Activated naive CD8-positive, alpha-beta T cell treated with anti-CD3 and anti-CD28 coated beads, Interleukin-2, amount 10 ng/mL, durations not matched to agents 7 days and 5 days (primary cell): ENCODE measurements at regions of chr4 and their contacts with region 1.

Region 1: DNA sequence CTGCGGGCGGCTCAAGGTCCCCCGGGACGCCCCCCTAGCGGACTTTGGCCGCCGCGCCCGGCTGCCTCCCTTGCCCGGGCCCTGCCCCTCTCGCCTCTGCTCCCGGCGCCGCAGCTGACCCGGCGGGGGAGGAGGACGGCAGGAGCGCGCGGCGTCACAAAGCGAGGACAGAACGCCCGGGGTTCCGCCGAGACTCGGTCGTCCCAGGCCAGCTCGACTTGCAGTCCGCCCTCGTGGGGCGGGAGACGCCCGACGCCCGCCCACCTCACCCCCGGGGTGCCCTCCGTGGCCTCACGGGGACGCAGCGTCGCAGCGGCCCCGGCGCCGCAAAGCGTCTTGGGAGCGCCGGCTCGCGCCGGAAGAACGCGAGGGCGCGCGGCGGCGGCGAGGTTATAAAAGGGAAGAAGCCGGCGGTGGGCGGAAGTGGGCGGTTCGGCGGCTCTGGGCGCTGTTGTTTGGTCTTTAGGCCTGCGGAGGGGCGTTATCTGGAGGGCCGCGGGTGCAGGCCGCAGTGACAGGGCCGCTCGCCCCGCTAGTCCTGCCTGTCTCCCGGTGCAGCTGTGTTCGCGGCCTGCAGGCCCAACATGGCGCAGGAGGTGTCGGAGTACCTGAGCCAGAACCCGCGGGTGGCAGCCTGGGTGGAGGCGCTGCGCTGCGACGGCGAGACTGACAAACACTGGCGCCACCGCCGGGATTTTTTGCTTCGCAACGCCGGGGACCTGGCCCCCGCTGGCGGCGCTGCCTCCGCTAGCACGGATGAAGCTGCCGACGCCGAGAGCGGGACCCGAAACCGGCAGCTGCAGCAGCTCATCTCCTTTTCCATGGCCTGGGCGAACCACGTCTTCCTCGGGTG is at the start of gene CDKN2AIP:
- DNase-seq: peak; percentile 95
- ATAC-seq: peak; percentile 86
- H3K4me3 Mint-ChIP-seq: peak within 1 kb of the TSS; percentile 99
- H3K27ac Mint-ChIP-seq: peak within 1 kb of the TSS; percentile 99
- H3K4me1 Mint-ChIP-seq: peaks cover 41% of the 10 kb centered on the region
- H3K27me3 Mint-ChIP-seq: no peaks in the 10 kb centered on the region
- total RNA-seq, gene CDKN2AIP: 38.8 to 39.8 TPM

Region 2: GRCh38 chr4:183407128-183407585 is 37.3 kb before region 1 on chr4:
- POLR2A ChIA-PET with region 1: interaction called, 17 read pairs
- DNase-seq: peak; percentile 96
- ATAC-seq: peak; percentile 97
- H3K4me3 Mint-ChIP-seq: peak overlapping the region; percentile 71
- H3K27ac Mint-ChIP-seq: peak overlapping the region; percentile 60
- H3K4me1 Mint-ChIP-seq: peaks cover 8% of the 10 kb centered on the region
- H3K27me3 Mint-ChIP-seq: peaks cover 6% of the 10 kb centered on the region

Region 3: DNA sequence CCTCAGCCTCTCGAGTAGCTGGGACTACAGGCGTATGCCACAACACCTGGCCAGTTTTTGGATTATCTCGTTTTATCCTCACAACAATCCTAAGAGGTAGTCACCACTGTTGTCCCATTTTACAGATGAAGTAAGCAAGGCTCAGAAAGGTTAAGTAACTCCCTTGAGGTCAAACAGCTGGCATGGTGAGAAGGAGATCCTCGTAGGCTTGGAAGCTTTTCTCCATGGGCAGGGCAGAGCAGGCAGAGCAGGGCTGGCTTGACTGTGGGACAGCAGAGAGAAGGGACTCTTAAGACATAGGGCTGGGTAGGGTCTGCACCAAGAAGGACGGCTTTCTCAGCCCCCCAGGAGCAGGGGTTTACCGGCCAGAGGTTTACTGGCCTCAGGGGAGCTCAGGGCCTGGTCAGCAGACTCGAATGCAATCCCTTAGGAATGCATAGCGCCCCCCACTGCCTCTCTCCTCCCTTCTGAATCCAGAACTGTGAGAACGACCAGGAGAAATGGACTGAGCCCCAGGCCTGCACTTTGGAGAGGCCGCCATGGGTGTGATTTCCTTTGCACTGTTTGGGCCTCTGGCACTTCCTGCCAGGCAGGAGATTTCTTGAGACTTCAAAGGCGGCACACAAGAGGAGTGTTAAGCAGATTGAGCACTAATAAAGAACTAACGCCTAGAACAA is 14.0 kb before region 1 on chr4:
- POLR2A ChIA-PET with region 1: interaction called, 47 read pairs
- DNase-seq: peak; percentile 39
- ATAC-seq: peak; percentile 96
- H3K4me3 Mint-ChIP-seq: peak overlapping the region; percentile 48
- H3K27ac Mint-ChIP-seq: peak overlapping the region; percentile 78
- H3K4me1 Mint-ChIP-seq: peaks cover 24% of the 10 kb centered on the region
- H3K27me3 Mint-ChIP-seq: no peaks in the 10 kb centered on the region

Region 4: GRCh38 chr4:183455431-183456195 is 11.2 kb after region 1 on chr4:
- POLR2A ChIA-PET with region 1: interaction called, 11 read pairs
- DNase-seq: no peak
- ATAC-seq: peak; percentile 81
- H3K4me3 Mint-ChIP-seq: peak overlapping the region; percentile 69
- H3K27ac Mint-ChIP-seq: peak overlapping the region; percentile 76
- H3K4me1 Mint-ChIP-seq: peaks cover 15% of the 10 kb centered on the region
- H3K27me3 Mint-ChIP-seq: peaks cover 3% of the 10 kb centered on the region

Region 5: DNA sequence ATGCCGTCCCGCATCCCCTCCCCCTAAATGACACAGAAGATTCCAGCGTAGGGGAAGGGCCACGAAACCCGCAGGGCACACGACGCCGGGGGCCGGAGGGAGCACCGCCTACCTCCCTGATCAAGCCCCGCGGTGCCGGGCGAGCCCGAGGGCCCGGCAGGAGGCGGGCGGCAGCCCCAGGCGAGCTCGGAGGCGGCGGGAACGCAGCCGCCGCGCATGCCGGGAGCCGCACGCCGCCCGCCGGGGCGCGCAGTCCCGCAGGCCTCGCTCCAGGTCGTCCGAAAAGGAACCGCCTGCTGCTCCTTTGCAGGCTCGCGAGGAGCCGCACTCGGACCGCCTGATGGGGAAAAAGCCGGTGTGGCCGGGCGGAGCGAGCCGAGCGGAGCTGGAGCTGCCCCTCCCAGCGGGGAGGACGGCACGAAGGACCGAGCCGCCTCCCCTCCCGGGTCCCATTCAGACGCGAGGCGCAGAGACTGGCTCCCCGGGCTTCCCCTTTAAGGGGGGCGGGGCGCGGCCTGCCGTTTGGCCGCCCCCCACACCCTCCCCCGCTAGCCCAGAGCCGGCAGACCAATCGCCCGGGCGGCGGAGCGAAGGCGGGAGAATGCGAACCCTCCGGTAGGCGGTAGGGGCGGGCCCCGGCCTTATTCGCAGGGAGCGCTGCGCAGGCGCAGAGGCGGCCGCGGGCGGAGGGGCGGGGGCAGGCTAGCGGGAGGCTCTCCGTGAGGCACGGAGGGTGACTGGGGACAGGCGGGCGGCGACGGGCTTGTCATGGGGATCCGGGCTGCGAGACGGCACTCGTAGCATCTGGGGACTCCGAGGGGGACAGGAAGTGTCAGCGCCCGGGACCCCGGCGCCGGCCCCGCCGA is 59.9 kb after region 1 on chr4:
- POLR2A ChIA-PET with region 1: interaction called, 36 read pairs
- DNase-seq: peak; percentile 100
- ATAC-seq: peak; percentile 81
- H3K4me3 Mint-ChIP-seq: peak overlapping the region; percentile 93
- H3K27ac Mint-ChIP-seq: peak overlapping the region; percentile 91
- H3K4me1 Mint-ChIP-seq: peaks cover 34% of the 10 kb centered on the region
- H3K27me3 Mint-ChIP-seq: no peaks in the 10 kb centered on the region